CD8-positive, alpha-beta T cell (primary cell): ENCODE measurements at regions of chr13 and their contacts with region 1.

Region 1: DNA sequence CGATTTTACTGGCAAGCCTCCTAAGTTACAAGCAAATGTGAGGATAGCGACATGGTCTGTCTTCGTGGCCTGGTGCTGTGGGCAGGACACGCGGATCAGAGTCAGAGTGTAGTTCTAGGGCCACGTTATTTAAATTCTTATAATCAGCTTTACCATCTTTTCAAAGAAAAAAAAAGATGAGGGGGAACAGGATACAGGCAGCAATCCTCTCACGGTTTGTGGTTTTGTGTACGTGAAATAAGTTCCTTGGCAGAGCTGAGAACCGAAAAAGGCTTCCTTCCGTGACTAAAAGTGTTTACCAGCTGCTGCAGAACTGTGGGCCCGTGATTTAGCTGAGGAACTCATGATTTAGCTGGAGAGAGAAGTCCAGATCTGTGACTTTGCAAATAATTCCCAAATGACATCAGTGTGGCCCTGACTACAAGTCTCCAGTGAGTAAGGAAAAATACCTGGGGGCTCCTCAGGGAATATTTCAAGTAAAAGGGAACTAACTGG is 27.2 kb downstream of the RCBTB2 start:
- DNase-seq: peak in 8 of 9 experiments; percentile 36 to 92 (median 58)
- ATAC-seq: peak; percentile 92
- H3K4me3 ChIP-seq: no peak overlapping the region
- H3K4me3 Mint-ChIP-seq: peak overlapping the region; percentile 65
- H3K27ac ChIP-seq: peak overlapping the region; percentile 36 to 76
- H3K27ac Mint-ChIP-seq: peak overlapping the region; percentile 89
- H3K4me1 ChIP-seq: peaks cover 29% of the 10 kb centered on the region
- H3K4me1 Mint-ChIP-seq: peaks cover 51% of the 10 kb centered on the region
- H3K27me3 ChIP-seq: no peaks in the 10 kb centered on the region
- H3K27me3 Mint-ChIP-seq: no peaks in the 10 kb centered on the region
- CTCF ChIP-seq: no peak

Region 2: GRCh38 chr13:47964863-47965262 is 540.8 kb before region 1 on chr13:
- CTCF ChIA-PET with region 1: no interaction called
- POLR2A ChIA-PET with region 1: no interaction called
- intact Hi-C with region 1: no loop called
- DNase-seq: no peak
- ATAC-seq: no peak
- H3K4me3 ChIP-seq: no peak overlapping the region
- H3K4me3 Mint-ChIP-seq: no peak overlapping the region
- H3K27ac ChIP-seq: no peak overlapping the region
- H3K27ac Mint-ChIP-seq: no peak overlapping the region
- H3K4me1 ChIP-seq: no peaks in the 10 kb centered on the region
- H3K4me1 Mint-ChIP-seq: no peaks in the 10 kb centered on the region
- H3K27me3 ChIP-seq: no peaks in the 10 kb centered on the region
- H3K27me3 Mint-ChIP-seq: no peaks in the 10 kb centered on the region
- CTCF ChIP-seq: no peak

Region 3: GRCh38 chr13:48412881-48413351 is 92.7 kb before region 1 on chr13 and contains the start of gene LPAR6:
- CTCF ChIA-PET with region 1: no interaction called
- POLR2A ChIA-PET with region 1: no interaction called
- intact Hi-C with region 1: loop called in 1 of 2 experiments (anchors 1 kb)
- DNase-seq: peak in 2 of 9 experiments; percentile 51 to 74
- ATAC-seq: peak; percentile 26
- H3K4me3 ChIP-seq: peak within 1 kb of the TSS; percentile 38 to 67
- H3K4me3 Mint-ChIP-seq: peak within 1 kb of the TSS; percentile 98
- H3K27ac ChIP-seq: peak within 1 kb of the TSS; percentile 24 to 83
- H3K27ac Mint-ChIP-seq: peak within 1 kb of the TSS; percentile 98
- H3K4me1 ChIP-seq: peaks cover 4% of the 10 kb centered on the region
- H3K4me1 Mint-ChIP-seq: peaks cover 42% of the 10 kb centered on the region
- H3K27me3 ChIP-seq: no peaks in the 10 kb centered on the region
- H3K27me3 Mint-ChIP-seq: no peaks in the 10 kb centered on the region
- CTCF ChIP-seq: no peak
- total RNA-seq, gene LPAR6: 5.4 to 5.7 TPM